ENCODE measurements at regions of chr3 and their contacts with region 1.

Region 1: DNA sequence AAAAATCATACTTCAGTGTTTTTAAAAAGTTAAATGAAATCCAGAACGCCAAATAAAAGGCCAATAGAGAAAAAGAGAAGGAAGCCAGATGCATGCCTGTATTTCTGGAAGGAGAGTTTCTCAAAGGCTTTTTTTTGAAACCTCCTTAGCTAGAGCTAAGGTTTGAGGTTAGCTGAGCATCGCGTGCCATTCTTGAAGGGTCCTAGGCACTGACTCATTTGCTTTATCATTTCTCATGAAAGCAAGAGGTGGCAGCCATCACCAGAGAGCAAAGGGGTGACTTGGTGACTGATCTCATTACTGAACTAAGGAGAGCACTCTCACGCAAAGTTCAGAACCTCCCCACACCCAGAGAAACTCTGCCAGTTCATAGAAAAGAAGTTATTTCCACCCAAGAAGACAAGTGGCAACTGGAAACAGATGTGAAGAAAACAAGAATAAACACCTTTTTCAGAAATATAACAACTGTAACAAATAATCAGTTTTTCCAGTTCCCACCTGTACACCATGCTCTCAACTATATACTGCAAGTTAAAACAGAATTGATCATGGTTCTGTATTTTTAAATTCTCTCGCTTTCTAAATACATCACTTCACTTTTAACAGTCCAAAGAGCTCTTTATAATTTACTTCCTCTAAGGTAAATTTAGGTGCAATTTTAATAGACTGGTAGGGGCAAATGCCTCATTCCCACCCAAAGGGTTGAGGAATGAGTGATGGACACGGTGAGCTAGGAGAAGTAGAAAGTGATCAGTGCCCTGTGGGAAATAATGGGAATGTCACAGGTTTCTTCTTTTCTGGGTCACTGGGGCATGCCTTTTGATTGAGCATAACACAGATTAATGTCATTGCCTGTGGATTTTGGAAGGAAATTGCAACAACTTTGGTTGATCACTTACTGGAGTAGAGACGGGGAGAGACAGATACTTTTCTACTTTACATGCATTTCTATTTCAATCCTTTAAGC is 24.7 kb downstream of the GPR15 start:
- DNase-seq: peak; percentile 88
- H3K4me3 Mint-ChIP-seq: peak overlapping the region; percentile 74
- H3K27ac Mint-ChIP-seq: peak overlapping the region; percentile 98
- H3K4me1 Mint-ChIP-seq: peaks cover 80% of the 10 kb centered on the region
- H3K27me3 Mint-ChIP-seq: peaks cover 3% of the 10 kb centered on the region

Region 2: GRCh38 chr3:97815149-97815917 is 741.1 kb before region 1 on chr3:
- CTCF ChIA-PET with region 1: no interaction called
- POLR2A ChIA-PET with region 1: no interaction called
- intact Hi-C with region 1: loop called (anchors 5 kb)
- DNase-seq: peak; percentile 73
- H3K4me3 Mint-ChIP-seq: no peak overlapping the region
- H3K27ac Mint-ChIP-seq: peak overlapping the region; percentile 65
- H3K4me1 Mint-ChIP-seq: peaks cover 15% of the 10 kb centered on the region
- H3K27me3 Mint-ChIP-seq: no peaks in the 10 kb centered on the region

Region 3: DNA sequence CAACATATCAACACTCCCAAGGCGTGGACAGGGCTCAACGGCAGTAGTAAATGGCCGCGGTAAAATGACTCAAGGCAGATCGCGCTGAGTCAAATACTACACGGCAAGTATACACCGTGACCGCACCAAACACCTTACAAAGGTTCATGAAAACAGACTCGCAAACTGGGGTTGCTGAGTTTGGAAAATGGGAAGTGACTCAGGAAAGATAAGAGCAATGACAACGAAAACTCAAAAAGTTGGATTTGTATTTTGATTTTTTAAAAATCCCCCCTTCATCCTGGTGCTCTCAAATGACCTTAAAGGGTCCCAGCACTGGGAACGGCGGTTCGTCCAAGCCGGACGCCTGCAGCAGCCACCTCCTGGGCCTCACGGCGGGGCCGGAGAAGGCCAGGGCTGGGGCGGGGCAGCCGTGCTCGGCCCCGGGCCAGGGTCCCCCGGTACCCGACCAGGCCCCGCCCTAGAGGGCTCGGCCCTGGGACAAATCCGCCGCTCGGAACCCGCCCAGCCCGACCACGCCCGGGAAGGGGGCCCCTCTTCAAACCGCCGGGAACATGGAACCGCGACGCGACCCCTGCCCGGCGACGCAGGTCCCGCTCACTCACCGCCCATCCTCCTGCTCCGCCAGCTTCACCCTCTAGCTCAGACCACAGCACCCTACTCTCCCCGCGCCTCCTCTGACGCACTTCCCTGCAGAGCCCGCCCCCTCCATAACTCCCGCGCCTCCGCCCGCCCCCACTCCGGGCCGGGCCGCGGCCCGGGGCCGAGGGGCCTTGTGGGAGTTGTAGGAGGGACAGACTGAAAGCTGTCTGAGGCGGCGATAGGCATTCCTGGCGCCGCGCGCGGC is 34.0 kb before region 1 on chr3 and contains the start of gene CLDND1:
- CTCF ChIA-PET with region 1: interaction called, 5 read pairs
- POLR2A ChIA-PET with region 1: interaction called, 38 read pairs
- intact Hi-C with region 1: loop called (anchors 1 kb)
- DNase-seq: peak; percentile 98
- H3K4me3 Mint-ChIP-seq: peak within 1 kb of the TSS; percentile 91
- H3K27ac Mint-ChIP-seq: peak within 1 kb of the TSS; percentile 86
- H3K4me1 Mint-ChIP-seq: peaks cover 66% of the 10 kb centered on the region
- H3K27me3 Mint-ChIP-seq: no peaks in the 10 kb centered on the region
- total RNA-seq, gene CLDND1: 199 to 208 TPM

Region 4: GRCh38 chr3:98540346-98540745 is 16.1 kb before region 1 on chr3:
- CTCF ChIA-PET with region 1: interaction called, 12 read pairs
- POLR2A ChIA-PET with region 1: interaction called, 39 read pairs
- intact Hi-C with region 1: loop called (anchors 1 kb)
- DNase-seq: no peak
- H3K4me3 Mint-ChIP-seq: no peak overlapping the region
- H3K27ac Mint-ChIP-seq: peak overlapping the region; percentile 69
- H3K4me1 Mint-ChIP-seq: peaks cover 57% of the 10 kb centered on the region
- H3K27me3 Mint-ChIP-seq: no peaks in the 10 kb centered on the region

Region 5: GRCh38 chr3:98573181-98573728 is 16.8 kb after region 1 on chr3:
- CTCF ChIA-PET with region 1: interaction called, 18 read pairs
- POLR2A ChIA-PET with region 1: interaction called, 8 read pairs
- intact Hi-C with region 1: loop called (anchors 1 kb)
- DNase-seq: no peak
- H3K4me3 Mint-ChIP-seq: no peak overlapping the region
- H3K27ac Mint-ChIP-seq: peak overlapping the region; percentile 66
- H3K4me1 Mint-ChIP-seq: peaks cover 54% of the 10 kb centered on the region
- H3K27me3 Mint-ChIP-seq: no peaks in the 10 kb centered on the region

Region 6: DNA sequence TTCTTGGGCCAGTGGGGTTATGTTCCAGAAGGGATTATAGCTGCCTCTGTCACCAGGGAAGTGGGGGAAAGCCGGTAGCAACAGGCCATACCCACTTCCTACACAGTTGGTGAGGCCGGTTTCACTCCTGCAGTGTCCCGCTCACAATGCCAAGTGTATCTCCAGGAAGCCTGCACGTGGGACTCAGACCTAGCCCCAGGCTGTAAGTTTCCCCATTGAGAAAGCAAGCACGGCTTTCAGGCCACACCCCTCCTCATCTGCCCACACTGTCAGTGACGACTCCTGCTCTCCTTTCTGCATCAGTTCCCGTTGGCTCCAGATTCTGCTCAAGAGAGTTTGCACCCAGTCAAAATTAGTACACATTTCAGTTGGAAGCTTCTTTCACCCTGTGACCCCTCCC is 88.6 kb after region 1 on chr3:
- CTCF ChIA-PET with region 1: no interaction called
- POLR2A ChIA-PET with region 1: no interaction called
- intact Hi-C with region 1: no loop called
- DNase-seq: no peak
- H3K4me3 Mint-ChIP-seq: no peak overlapping the region
- H3K27ac Mint-ChIP-seq: no peak overlapping the region
- H3K4me1 Mint-ChIP-seq: no peaks in the 10 kb centered on the region
- H3K27me3 Mint-ChIP-seq: peaks cover 14% of the 10 kb centered on the region

Measured in activated CD4-positive, alpha-beta memory T cell treated with anti-CD3 and anti-CD28 coated beads for 36 hours (primary cell).